Calu3 (cell line): ENCODE measurements at regions of chr10 and their contacts with region 1.

Region 1: GRCh38 chr10:14712991-14713497 is 61.7 kb downstream of the FAM107B start:
- DNase-seq: peak; percentile 57
- H3K4me3 Mint-ChIP-seq: peak overlapping the region; percentile 46
- H3K27ac Mint-ChIP-seq: peak overlapping the region; percentile 92
- H3K4me1 Mint-ChIP-seq: peaks cover 23% of the 10 kb centered on the region
- H3K27me3 Mint-ChIP-seq: no peaks in the 10 kb centered on the region
- CTCF ChIP-seq: no peak

Region 2: DNA sequence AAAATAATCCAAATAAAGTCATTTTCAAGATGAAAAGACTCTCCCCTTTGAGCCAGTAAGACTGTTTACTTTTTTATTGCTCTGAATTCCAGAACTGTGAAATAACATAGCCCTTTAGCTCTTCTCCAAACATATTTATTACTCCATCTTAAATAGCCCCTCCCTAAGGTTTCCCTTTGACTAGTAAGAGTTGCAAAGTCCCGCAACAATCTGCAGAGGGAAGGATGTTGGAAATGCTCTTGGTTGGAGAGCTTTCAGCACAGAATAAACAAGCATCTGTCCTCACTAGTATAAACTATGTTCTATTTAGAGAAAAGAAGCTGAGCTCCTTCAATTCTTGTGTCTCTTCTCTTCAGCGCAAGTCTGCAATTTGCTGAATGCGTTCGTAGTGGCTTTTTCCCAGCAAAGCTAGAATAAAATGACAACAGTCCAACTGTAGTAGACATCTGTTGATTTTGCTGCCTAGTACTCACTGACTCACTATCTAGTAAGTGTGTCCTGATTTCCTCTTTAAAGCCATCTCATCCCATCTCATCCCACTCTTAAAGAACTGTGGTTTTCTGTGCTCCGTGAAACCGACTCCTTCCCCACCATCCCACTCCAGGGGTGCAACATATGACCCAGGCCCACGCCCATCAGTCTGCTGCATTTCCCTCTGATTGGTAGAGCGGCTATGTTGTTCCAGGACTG is 42.3 kb before region 1 on chr10:
- CTCF ChIA-PET with region 1: no interaction called
- intact Hi-C with region 1: loop called (anchors 5 kb)
- DNase-seq: no peak
- H3K4me3 Mint-ChIP-seq: no peak overlapping the region
- H3K27ac Mint-ChIP-seq: no peak overlapping the region
- H3K4me1 Mint-ChIP-seq: peaks cover 68% of the 10 kb centered on the region
- H3K27me3 Mint-ChIP-seq: no peaks in the 10 kb centered on the region
- CTCF ChIP-seq: no peak

Region 3: GRCh38 chr10:15280462-15280861 is 567.4 kb after region 1 on chr10:
- CTCF ChIA-PET with region 1: no interaction called
- intact Hi-C with region 1: no loop called
- DNase-seq: no peak
- H3K4me3 Mint-ChIP-seq: no peak overlapping the region
- H3K27ac Mint-ChIP-seq: no peak overlapping the region
- H3K4me1 Mint-ChIP-seq: no peaks in the 10 kb centered on the region
- H3K27me3 Mint-ChIP-seq: peaks cover 63% of the 10 kb centered on the region
- CTCF ChIP-seq: no peak